WTC11 (cell line): ENCODE measurements at regions of chr19 and their contacts with region 1.

Region 1: GRCh38 chr19:11227201-11227886 is 12.1 kb upstream of the ANGPTL8 start:
- DNase-seq: peak; percentile 92
- ATAC-seq: peak; percentile 96
- H3K4me3 Mint-ChIP-seq: no peak overlapping the region
- H3K27ac Mint-ChIP-seq: 0 out of 2 replicates have a peak overlapping the region, but pooled peaks have one; percentile 23
- H3K4me1 Mint-ChIP-seq: peaks cover 3% of the 10 kb centered on the region; the same call in 1 of the 2 replicates
- H3K27me3 Mint-ChIP-seq: no peaks in the 10 kb centered on the region
- CTCF ChIP-seq: peak; percentile 58

Region 2: GRCh38 chr19:11155373-11156120 is 71.8 kb before region 1 on chr19 and contains the start of gene SPC24:
- CTCF ChIA-PET with region 1: no interaction called
- POLR2A ChIA-PET with region 1: no interaction called
- DNase-seq: peak; percentile 96
- ATAC-seq: peak; percentile 99
- H3K4me3 Mint-ChIP-seq: peak within 1 kb of the TSS; percentile 75
- H3K27ac Mint-ChIP-seq: peak within 1 kb of the TSS; percentile 55
- H3K4me1 Mint-ChIP-seq: peaks cover 7% of the 10 kb centered on the region
- H3K27me3 Mint-ChIP-seq: no peaks in the 10 kb centered on the region
- CTCF ChIP-seq: no peak
- total RNA-seq, gene SPC24: 52.0 to 62.2 TPM (median 58.3 TPM) in 3 replicates

Region 3: GRCh38 chr19:11242864-11243797 is 15.8 kb after region 1 on chr19:
- CTCF ChIA-PET with region 1: interaction called, 24 read pairs
- POLR2A ChIA-PET with region 1: no interaction called
- DNase-seq: peak; percentile 99
- ATAC-seq: peak; percentile 97
- H3K4me3 Mint-ChIP-seq: peak overlapping the region; percentile 61
- H3K27ac Mint-ChIP-seq: no peak overlapping the region
- H3K4me1 Mint-ChIP-seq: peaks cover 4% of the 10 kb centered on the region
- H3K27me3 Mint-ChIP-seq: no peaks in the 10 kb centered on the region
- CTCF ChIP-seq: peak; percentile 91